ENCODE measurements at regions of chr7 and their contacts with region 1.

Region 1: DNA sequence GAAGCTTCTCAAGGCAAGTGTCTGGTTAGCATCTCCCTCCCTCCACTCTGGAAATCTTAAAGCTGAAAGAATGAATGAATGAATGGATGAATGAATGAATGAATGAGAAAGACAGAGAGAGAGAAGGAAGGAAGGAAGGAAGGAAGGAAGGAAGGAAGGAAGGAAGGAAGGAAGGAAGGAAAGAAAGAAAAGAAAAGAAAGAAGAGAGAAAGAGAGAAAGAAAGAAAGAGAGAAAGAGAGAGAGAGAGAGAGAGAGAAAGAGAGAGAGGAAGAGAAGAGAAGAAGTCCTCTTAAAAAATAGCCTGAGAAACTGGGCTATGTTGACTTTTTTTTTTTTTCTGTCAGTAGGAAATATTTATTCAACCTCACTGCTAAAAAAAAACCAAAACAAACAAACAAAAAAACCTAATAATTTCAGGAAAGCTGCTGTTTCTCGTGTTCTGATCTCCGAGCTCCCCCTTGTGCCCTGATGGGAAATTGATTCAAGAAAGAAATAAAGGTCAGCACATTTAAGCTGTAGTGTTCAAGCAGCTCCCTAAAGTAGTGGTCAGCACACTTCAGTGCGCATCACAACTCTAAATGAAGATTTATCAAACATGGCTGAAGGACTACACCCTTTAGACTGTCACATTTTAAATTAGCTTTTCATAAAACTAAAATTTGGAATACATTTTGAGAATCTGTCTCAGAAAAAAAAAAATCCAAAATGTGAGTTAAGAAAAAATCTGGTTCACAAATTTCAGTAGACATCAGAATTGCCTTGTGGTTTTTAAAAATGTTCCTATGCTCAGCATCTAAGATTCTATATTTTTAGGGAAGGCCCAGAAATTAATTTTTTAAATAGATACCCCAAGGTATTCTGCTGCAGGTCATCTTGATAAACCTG is 154.3 kb downstream of the ELAPOR2 start:
- DNase-seq: no peak
- ATAC-seq: no peak
- H3K4me3 ChIP-seq: no peak overlapping the region
- H3K4me3 Mint-ChIP-seq: no peak overlapping the region
- H3K27ac ChIP-seq: no peak overlapping the region
- H3K27ac Mint-ChIP-seq: no peak overlapping the region
- H3K4me1 ChIP-seq: no peaks in the 10 kb centered on the region
- H3K4me1 Mint-ChIP-seq: peaks cover 0 to 2% (median 0%) of the 10 kb centered on the region in 7 donors
- H3K27me3 ChIP-seq: no peaks in the 10 kb centered on the region
- H3K27me3 Mint-ChIP-seq: peaks cover 0 to 9% (median 6%) of the 10 kb centered on the region in 5 donors

Region 2: DNA sequence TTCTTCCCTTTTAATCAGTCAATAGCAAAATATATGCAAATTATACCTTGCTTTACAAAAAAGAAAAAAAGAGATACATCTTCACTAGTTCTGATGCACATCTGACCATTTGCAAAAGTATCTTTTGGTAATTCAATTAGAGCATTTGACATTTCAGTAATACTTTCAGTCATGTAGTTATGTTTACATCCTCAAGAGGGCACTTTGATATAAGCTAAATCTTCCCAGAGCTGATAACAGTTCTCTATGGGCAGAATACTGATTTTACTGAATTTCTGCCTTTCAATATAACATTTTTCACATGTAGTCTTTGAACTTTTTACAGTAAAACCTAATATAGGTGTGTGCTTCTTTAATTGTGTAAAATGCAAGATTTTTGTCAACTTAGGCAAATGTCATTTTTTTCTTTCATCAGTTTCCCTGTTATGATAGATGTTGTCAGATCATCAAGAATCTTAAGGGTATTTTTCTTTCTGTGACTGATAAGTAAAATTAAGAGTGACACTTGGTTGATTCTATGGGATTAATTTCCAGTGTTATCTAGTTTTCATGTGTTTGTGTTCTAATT is 1014.9 kb before region 1 on chr7:
- CTCF ChIA-PET with region 1: no interaction called
- POLR2A ChIA-PET with region 1: no interaction called
- intact Hi-C with region 1: loop called in 1 of 2 experiments (anchors 10 kb)
- DNase-seq: no peak
- ATAC-seq: no peak
- H3K4me3 ChIP-seq: no peak overlapping the region
- H3K4me3 Mint-ChIP-seq: no peak overlapping the region
- H3K27ac ChIP-seq: no peak overlapping the region
- H3K27ac Mint-ChIP-seq: no peak overlapping the region
- H3K4me1 ChIP-seq: no peaks in the 10 kb centered on the region
- H3K4me1 Mint-ChIP-seq: no peaks in the 10 kb centered on the region
- H3K27me3 ChIP-seq: no peaks in the 10 kb centered on the region
- H3K27me3 Mint-ChIP-seq: no peaks in the 10 kb centered on the region

Region 3: DNA sequence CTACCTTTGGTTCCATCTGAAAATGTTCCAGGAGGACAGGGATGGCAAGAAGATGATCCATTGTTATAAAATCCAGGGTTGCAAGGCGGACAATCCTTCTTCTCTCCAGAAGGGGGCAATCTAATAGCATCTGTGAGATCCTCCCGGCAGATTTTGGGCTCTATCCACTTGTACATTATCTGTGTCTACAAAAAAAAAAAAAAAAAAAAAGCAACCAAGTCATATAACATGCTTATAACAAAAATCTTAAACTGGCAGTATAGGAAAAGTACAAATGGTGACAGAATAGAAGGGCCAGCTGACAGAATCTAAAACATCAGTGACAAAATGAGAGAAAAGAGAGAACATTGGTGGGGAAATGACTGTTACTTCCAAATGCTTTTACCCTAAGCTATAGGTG is 21.5 kb after region 1 on chr7:
- CTCF ChIA-PET with region 1: no interaction called
- POLR2A ChIA-PET with region 1: no interaction called
- intact Hi-C with region 1: no loop called
- DNase-seq: peak in 7 of 9 donors; percentile 25 to 56 (median 38)
- ATAC-seq: peak; percentile 84
- H3K4me3 ChIP-seq: no peak overlapping the region
- H3K4me3 Mint-ChIP-seq: no peak overlapping the region
- H3K27ac ChIP-seq: no peak overlapping the region
- H3K27ac Mint-ChIP-seq: peak overlapping the region in 2 of 9 donors; percentile 28 to 53
- H3K4me1 ChIP-seq: no peaks in the 10 kb centered on the region
- H3K4me1 Mint-ChIP-seq: no peaks in the 10 kb centered on the region
- H3K27me3 ChIP-seq: no peaks in the 10 kb centered on the region
- H3K27me3 Mint-ChIP-seq: peaks cover 0 to 16% (median 4%) of the 10 kb centered on the region in 5 donors

Measured in naive thymus-derived CD4-positive, alpha-beta T cell (primary cell).